ENCODE measurements at regions of chr15 and their contacts with region 1.

Region 1: DNA sequence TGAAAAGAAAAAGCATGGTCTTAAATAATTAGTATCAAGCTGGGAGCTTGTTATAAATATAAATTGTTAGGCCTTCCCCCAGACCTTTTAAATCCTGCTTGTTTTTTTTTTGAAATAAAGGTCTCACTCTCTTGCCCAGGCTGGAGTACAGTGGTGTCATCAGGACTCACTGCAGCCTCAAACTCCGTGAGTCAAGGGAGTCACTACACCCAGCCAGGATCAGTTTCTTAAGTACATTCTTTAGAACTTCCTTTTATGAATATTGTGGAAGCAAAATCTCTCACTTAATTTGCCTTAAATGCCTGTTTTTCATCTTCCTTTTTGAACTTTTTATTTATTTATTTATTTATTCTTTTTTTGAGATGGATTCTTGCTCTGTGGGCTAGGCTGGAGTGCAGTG is 20.8 kb upstream of the DENND4A start:
- DNase-seq: no peak
- H3K4me3 ChIP-seq: no peak overlapping the region
- H3K27ac ChIP-seq: no peak overlapping the region
- H3K4me1 ChIP-seq: no peaks in the 10 kb centered on the region
- H3K27me3 ChIP-seq: no peaks in the 10 kb centered on the region
- CTCF ChIP-seq: no peak
- EP300 ChIP-seq: no peak
- RAD21 ChIP-seq: no peak

Region 2: DNA sequence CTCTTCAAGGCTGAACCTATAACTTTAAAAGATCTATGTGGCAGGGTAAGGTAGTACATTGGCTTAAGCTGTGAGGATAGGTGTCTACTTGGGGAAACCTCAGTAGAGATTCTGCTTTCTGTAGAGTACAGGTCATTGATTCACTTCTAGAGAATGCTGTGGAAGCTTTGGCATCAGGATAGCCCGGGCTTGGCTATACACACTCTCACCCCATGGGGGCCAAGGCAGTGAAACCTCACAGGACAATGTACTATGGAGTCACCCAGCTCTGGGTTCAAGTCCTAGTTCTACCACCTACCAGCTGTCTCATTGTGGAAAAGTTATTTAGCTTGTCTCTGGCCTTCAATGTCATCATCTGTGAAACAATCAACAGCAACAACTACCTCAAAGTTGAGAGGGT is 792.5 kb before region 1 on chr15:
- CTCF ChIA-PET with region 1: no interaction called
- POLR2A ChIA-PET with region 1: no interaction called
- DNase-seq: no peak
- H3K4me3 ChIP-seq: no peak overlapping the region
- H3K27ac ChIP-seq: no peak overlapping the region
- H3K4me1 ChIP-seq: no peaks in the 10 kb centered on the region
- H3K27me3 ChIP-seq: no peaks in the 10 kb centered on the region
- CTCF ChIP-seq: no peak
- EP300 ChIP-seq: no peak
- RAD21 ChIP-seq: no peak

Region 3: DNA sequence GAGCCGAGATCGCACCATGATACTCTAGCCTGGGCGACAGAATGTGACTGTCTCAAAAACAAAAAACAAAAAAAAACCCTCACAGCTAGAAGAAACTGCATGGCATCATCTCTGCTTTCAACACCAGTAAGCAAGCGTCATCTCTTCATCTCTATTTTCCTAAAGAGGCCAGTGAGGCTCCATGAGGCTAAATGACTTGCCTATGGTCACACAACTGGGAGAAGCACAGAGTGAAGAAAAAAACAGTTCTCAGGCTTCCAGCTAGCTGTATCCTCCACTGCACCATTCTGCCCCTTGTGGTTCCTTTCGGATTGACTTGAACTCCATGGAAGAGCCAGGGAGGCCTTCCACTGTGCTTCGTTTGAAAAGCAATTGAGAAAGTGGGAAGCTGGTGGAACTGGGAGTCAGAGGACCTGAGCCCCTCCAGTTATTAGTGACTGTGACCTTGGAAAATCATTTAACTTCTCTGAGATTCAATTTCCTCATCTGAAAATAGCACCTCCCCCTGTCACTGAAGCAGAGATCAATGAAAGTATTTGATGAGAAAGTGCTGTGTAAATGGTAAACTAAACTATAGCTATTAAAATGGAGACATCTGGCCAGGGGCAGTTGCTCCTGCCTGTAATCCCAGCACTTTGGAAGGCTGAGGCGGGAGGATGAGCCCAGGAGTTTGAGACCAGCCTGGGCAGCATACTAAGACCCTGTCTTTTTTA is 11.3 kb after region 1 on chr15:
- CTCF ChIA-PET with region 1: interaction called, 14 read pairs
- POLR2A ChIA-PET with region 1: no interaction called
- DNase-seq: peak; percentile 71
- H3K4me3 ChIP-seq: no peak overlapping the region
- H3K27ac ChIP-seq: no peak overlapping the region
- H3K4me1 ChIP-seq: no peaks in the 10 kb centered on the region; a peak in 1 of 4 replicates
- H3K27me3 ChIP-seq: no peaks in the 10 kb centered on the region
- CTCF ChIP-seq: peak; percentile 66
- EP300 ChIP-seq: no peak
- RAD21 ChIP-seq: peak; percentile 77

Region 4: DNA sequence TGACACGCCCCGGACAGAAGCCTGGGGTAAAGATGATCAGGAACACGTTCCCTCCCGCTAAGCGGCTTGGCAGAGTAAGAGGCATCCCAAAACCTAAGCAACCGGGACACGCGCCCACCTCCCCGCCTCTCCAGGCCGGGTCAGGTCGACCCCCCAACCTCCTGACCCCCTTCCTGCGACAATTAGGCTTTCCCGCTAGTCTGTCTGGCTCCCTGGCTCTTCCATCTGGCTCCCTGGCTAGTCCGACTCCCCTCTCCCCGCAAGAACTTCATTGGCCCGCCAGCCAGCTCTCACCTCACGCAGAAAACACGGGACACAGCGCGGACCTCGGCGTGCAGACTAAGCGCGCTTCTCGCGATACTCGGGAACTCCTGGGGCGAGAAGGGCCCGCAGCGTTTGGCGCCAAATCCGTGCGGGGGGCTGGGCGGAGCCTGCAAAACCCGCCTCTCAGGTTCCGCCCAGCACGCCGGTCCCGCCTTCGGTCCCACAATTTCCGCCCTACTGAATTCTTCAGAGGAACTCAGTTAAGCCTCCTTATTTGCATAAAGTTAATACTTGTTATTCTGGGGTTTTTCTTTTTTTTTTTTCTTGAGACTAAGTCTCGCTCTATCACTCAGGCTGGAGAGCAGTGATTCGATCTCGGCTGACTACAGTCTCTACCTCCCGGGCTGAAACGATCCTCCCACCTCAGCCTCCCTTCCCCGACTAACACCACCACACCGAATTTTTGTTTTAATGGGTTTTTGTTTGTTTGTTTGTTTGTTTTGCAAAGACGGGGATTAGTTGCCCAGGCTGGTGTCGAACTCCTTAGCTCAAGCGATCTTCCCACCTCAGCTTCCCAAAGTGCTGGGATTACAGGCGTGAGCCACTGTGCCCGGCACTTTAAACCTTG is 543.7 kb after region 1 on chr15 and contains the start of gene TIPIN:
- CTCF ChIA-PET with region 1: no interaction called
- POLR2A ChIA-PET with region 1: no interaction called
- DNase-seq: peak; percentile 93
- H3K4me3 ChIP-seq: peak within 1 kb of the TSS; percentile 64 to 86
- H3K27ac ChIP-seq: peak within 1 kb of the TSS; percentile 47 to 67; a peak in 3 of 4 replicates
- H3K4me1 ChIP-seq: peaks cover 0 to 3% of the 10 kb centered on the region in 2 experiments; a peak in 1 of 4 replicates
- H3K27me3 ChIP-seq: no peaks in the 10 kb centered on the region
- CTCF ChIP-seq: no peak
- EP300 ChIP-seq: peak in 1 of 2 experiments; percentile 37; a peak in 2 of 4 replicates
- RAD21 ChIP-seq: no peak
- polyA plus RNA-seq, gene TIPIN: 5.7 and 6.0 TPM in 2 replicates

Measured in SK-N-SH (cell line).